Activated CD8-positive, alpha-beta T cell treated with anti-CD3 and anti-CD28 coated beads for 36 hours (primary cell): ENCODE measurements at regions of chr3 and their contacts with region 1.

Region 1: DNA sequence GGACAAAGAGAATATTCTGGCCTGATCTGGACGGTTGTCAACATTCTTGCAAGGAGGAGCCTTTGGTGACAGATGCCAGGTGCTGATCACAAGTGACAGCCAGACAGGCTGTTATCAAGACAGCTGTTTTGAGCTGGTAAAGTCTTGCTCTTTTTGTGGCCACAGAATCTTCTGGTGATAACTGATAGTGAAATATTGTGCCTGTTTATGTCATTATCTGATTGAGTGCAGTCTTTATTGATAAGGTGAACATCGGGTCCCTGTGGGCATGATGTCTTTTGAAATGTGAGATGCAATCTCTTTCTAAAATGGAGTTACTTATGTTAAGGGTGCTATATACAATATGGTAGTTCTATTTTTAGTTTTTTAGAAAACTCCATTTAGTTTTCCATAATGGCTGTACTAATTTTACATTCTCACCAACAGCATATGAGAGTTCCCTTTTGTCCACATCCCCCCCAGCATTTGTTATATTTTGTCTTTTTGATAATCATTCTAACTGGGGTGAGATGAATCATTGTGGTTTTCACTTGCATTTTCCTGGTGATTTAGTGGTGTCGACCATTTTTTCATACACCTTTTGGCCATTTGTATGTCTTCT is 10.7 kb downstream of the CEP63 start:
- DNase-seq: no peak
- ATAC-seq: peak; percentile 71
- H3K4me3 Mint-ChIP-seq: no peak overlapping the region
- H3K27ac Mint-ChIP-seq: no peak overlapping the region
- H3K4me1 Mint-ChIP-seq: peaks cover 62% of the 10 kb centered on the region
- H3K27me3 Mint-ChIP-seq: no peaks in the 10 kb centered on the region
- CTCF ChIP-seq: no peak

Region 2: GRCh38 chr3:134485718-134486576 is 10.6 kb before region 1 on chr3 and contains the starts of genes ANAPC13 and CEP63:
- CTCF ChIA-PET with region 1: interaction called, 11 read pairs
- POLR2A ChIA-PET with region 1: no interaction called
- intact Hi-C with region 1: no loop called
- DNase-seq: peak; percentile 97
- ATAC-seq: peak; percentile 83
- H3K4me3 Mint-ChIP-seq: peak within 1 kb of the TSS; percentile 91
- H3K27ac Mint-ChIP-seq: peak within 1 kb of the TSS; percentile 99
- H3K4me1 Mint-ChIP-seq: peaks cover 45% of the 10 kb centered on the region
- H3K27me3 Mint-ChIP-seq: no peaks in the 10 kb centered on the region
- CTCF ChIP-seq: no peak
- total RNA-seq, gene ANAPC13: 27.3 to 28.0 TPM
- total RNA-seq, gene CEP63: 25.3 to 27.0 TPM

Region 3: GRCh38 chr3:134563601-134564000 is 67.0 kb after region 1 on chr3:
- CTCF ChIA-PET with region 1: no interaction called
- POLR2A ChIA-PET with region 1: no interaction called
- intact Hi-C with region 1: no loop called
- DNase-seq: no peak
- ATAC-seq: no peak
- H3K4me3 Mint-ChIP-seq: no peak overlapping the region
- H3K27ac Mint-ChIP-seq: no peak overlapping the region
- H3K4me1 Mint-ChIP-seq: no peaks in the 10 kb centered on the region
- H3K27me3 Mint-ChIP-seq: no peaks in the 10 kb centered on the region
- CTCF ChIP-seq: no peak